Right lobe of liver (tissue), 6 donors: ENCODE measurements at regions of chr6 and their contacts with region 1.

Region 1: GRCh38 chr6:138410972-138411667 is 7.1 kb downstream of the HEBP2 start:
- DNase-seq: no peak
- ATAC-seq: peak in 1 of 4 donors; percentile 9
- H3K4me3 ChIP-seq: no peak overlapping the region
- H3K27ac ChIP-seq: peak overlapping the region in 2 of 3 donors; percentile 37 to 62
- H3K4me1 ChIP-seq: peaks cover 0 to 38% (median 12%) of the 10 kb centered on the region in 4 donors
- H3K27me3 ChIP-seq: no peaks in the 10 kb centered on the region
- CTCF ChIP-seq: no peak
- POLR2A ChIP-seq: no peak

Region 2: GRCh38 chr6:138129190-138129589 is 281.9 kb before region 1 on chr6:
- intact Hi-C with region 1: loop called in 1 of 2 experiments (anchors 10 kb)
- DNase-seq: no peak
- ATAC-seq: no peak
- H3K4me3 ChIP-seq: no peak overlapping the region
- H3K27ac ChIP-seq: no peak overlapping the region
- H3K4me1 ChIP-seq: no peaks in the 10 kb centered on the region
- H3K27me3 ChIP-seq: no peaks in the 10 kb centered on the region
- CTCF ChIP-seq: no peak
- POLR2A ChIP-seq: no peak

Region 3: GRCh38 chr6:138465007-138465645 is 54.0 kb after region 1 on chr6:
- intact Hi-C with region 1: no loop called
- DNase-seq: no peak
- ATAC-seq: peak in 1 of 4 donors; percentile 29
- H3K4me3 ChIP-seq: no peak overlapping the region
- H3K27ac ChIP-seq: no peak overlapping the region
- H3K4me1 ChIP-seq: no peaks in the 10 kb centered on the region
- H3K27me3 ChIP-seq: no peaks in the 10 kb centered on the region
- CTCF ChIP-seq: no peak
- POLR2A ChIP-seq: no peak